Activated CD4-positive, alpha-beta memory T cell treated with anti-CD3 and anti-CD28 coated beads for 36 hours (primary cell): ENCODE measurements at regions of chr21 and their contacts with region 1.

Region 1: GRCh38 chr21:31173881-31174555 is 135.7 kb upstream of the KRTAP19-8 start:
- DNase-seq: peak; percentile 75
- H3K4me3 Mint-ChIP-seq: peak overlapping the region; percentile 56
- H3K27ac Mint-ChIP-seq: peak overlapping the region; percentile 57
- H3K4me1 Mint-ChIP-seq: peaks cover 87% of the 10 kb centered on the region
- H3K27me3 Mint-ChIP-seq: no peaks in the 10 kb centered on the region

Region 2: DNA sequence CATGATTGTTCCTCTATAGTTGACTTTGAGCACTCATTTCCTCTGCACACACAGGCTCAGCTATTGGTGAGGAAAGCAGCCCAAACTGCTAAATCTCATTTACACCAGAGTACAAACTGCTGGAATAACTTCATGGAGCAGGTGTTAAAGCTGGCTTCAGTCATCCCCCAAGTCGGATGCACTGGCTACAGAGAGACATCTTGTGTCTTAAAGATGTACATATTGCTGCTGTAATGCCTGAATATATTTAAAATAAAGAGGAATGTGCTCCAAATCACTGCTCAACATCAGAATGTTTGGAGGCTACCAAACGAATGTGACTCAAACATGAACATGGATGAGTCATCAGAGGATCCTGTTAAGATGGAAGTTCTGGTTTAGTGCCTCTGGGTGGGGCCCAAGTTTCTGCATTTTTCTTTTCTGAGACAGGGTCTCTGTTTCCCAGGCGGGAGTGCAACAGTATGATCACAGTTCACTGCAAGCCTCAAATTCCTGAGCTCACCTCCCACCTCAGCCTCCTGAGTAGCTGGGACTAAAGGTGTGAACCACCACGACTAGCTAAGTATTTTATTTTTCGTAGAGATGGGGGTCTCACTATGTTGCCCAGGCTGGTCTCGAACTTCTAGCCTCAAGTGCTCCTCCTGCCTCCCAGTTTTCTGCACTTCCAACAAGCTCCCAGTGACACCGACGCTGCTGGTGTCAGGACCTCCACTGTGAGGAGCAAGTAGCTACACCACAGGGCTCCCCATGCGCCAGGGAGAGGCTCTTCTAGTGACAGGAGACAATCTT is 56.7 kb before region 1 on chr21:
- CTCF ChIA-PET with region 1: no interaction called
- POLR2A ChIA-PET with region 1: no interaction called
- intact Hi-C with region 1: no loop called
- DNase-seq: peak; percentile 34
- H3K4me3 Mint-ChIP-seq: no peak overlapping the region
- H3K27ac Mint-ChIP-seq: peak overlapping the region; percentile 50
- H3K4me1 Mint-ChIP-seq: peaks cover 17% of the 10 kb centered on the region
- H3K27me3 Mint-ChIP-seq: no peaks in the 10 kb centered on the region

Region 3: GRCh38 chr21:31161157-31161556 is 12.9 kb before region 1 on chr21:
- CTCF ChIA-PET with region 1: interaction called, 16 read pairs
- POLR2A ChIA-PET with region 1: interaction called, 4 read pairs
- intact Hi-C with region 1: loop called (anchors 1 kb)
- DNase-seq: peak; percentile 58
- H3K4me3 Mint-ChIP-seq: peak overlapping the region; percentile 53
- H3K27ac Mint-ChIP-seq: peak overlapping the region; percentile 77
- H3K4me1 Mint-ChIP-seq: peaks cover 84% of the 10 kb centered on the region
- H3K27me3 Mint-ChIP-seq: no peaks in the 10 kb centered on the region